Calu3 (cell line): ENCODE measurements at regions of chr2 and their contacts with region 1.

Region 1: DNA sequence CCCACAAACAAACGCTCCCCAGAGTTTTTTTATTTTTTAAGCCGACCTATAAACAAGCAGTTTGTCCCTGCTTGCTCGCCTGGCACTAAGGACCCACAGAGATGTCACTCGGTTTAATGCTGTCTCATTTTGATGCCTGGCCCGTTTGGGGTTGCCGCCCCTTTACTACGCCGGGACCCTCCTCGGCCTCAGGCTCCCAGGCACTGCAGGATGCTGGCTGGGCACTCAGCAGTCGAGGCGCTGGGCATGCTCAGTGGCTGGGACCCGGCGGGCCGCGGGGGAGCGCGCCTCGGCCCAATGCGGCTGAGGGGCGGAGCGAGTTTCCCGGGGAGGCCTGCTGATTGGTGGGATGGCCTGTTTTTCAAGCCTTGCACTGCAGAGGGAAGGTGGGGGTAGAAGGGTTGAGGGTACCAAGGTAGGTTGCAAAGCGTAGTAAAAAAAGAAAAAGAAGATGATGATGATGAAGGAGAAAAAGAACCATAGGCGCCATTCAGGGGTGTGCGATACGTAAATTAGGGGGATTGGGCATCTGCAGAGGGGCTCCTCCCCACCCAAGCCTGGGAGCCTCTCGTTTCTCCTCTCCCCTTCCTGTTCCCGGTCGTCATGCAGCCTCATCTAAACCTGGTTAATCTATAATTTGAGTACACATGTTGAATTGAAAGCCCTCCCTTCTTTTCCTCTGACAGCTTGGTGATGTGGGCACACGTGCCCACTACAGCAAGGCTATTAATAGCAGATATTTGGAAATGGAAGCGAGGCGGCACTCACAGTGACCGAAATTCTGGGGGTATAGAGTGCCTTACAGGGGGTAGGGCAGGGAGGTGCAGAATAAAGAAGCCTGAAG is 1.5 kb upstream of the IRS1 start:
- DNase-seq: peak; percentile 94
- H3K4me3 Mint-ChIP-seq: peak overlapping the region; percentile 87
- H3K27ac Mint-ChIP-seq: peak overlapping the region; percentile 83
- H3K4me1 Mint-ChIP-seq: peaks cover 44% of the 10 kb centered on the region
- H3K27me3 Mint-ChIP-seq: no peaks in the 10 kb centered on the region
- CTCF ChIP-seq: no peak

Region 2: DNA sequence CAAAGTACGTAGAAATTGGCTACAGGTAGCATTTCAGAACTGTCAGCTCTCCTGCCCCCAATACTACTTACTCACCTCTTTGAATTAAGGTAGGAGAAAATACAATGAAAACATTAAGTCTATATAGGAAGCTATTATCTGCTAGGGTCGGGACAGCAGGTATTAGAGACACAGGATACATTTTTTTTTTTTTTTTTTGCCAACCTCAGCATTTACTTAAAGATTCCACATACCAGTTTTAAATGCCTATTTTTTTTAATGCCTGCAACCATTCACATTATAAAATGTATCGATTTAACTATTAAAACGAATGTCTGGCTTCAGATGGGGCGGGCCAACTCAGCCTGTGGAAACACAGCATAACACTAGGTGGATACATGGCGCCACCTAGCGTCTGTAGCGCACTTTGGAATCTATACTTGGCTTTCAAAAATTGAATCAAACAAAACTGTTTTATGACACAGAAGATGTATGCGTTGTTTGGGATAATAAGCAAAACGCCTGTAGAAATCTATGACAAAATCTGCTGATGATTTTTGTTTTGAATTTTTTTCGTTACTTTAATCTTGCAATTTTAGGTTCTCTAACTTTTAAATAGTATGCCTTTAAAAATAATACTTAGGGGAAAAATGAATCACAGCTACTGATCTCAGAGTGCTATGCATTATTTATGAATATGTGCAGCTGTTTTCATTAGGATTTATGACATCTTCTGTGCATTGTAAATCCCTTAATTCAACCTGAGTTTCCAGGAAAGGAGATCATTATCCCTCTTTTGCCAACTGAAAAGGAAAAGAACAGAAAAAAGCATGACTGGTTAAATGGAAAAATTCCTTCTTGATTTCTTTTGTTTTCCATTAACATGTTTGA is 1140.7 kb before region 1 on chr2:
- CTCF ChIA-PET with region 1: interaction called, 14 read pairs
- intact Hi-C with region 1: no loop called
- DNase-seq: peak; percentile 78
- H3K4me3 Mint-ChIP-seq: no peak overlapping the region
- H3K27ac Mint-ChIP-seq: no peak overlapping the region
- H3K4me1 Mint-ChIP-seq: no peaks in the 10 kb centered on the region
- H3K27me3 Mint-ChIP-seq: no peaks in the 10 kb centered on the region
- CTCF ChIP-seq: peak; percentile 81

Region 3: GRCh38 chr2:225889446-225889850 is 911.7 kb before region 1 on chr2:
- CTCF ChIA-PET with region 1: interaction called, 7 read pairs
- intact Hi-C with region 1: loop called (anchors 1 kb)
- DNase-seq: peak; percentile 33
- H3K4me3 Mint-ChIP-seq: no peak overlapping the region
- H3K27ac Mint-ChIP-seq: no peak overlapping the region
- H3K4me1 Mint-ChIP-seq: peaks cover 5% of the 10 kb centered on the region
- H3K27me3 Mint-ChIP-seq: no peaks in the 10 kb centered on the region
- CTCF ChIP-seq: peak; percentile 78

Region 4: GRCh38 chr2:226130192-226130591 is 671.0 kb before region 1 on chr2:
- CTCF ChIA-PET with region 1: interaction called, 4 read pairs
- intact Hi-C with region 1: loop called (anchors 5 kb)
- DNase-seq: no peak
- H3K4me3 Mint-ChIP-seq: no peak overlapping the region
- H3K27ac Mint-ChIP-seq: no peak overlapping the region
- H3K4me1 Mint-ChIP-seq: peaks cover 21% of the 10 kb centered on the region
- H3K27me3 Mint-ChIP-seq: no peaks in the 10 kb centered on the region
- CTCF ChIP-seq: no peak

Region 5: GRCh38 chr2:226489775-226490541 is 311.2 kb before region 1 on chr2:
- CTCF ChIA-PET with region 1: no interaction called
- intact Hi-C with region 1: no loop called
- DNase-seq: no peak
- H3K4me3 Mint-ChIP-seq: no peak overlapping the region
- H3K27ac Mint-ChIP-seq: no peak overlapping the region
- H3K4me1 Mint-ChIP-seq: peaks cover under 1% of the 10 kb centered on the region
- H3K27me3 Mint-ChIP-seq: no peaks in the 10 kb centered on the region
- CTCF ChIP-seq: no peak

Region 6: GRCh38 chr2:226583715-226584114 is 217.4 kb before region 1 on chr2:
- CTCF ChIA-PET with region 1: interaction called, 3 read pairs
- intact Hi-C with region 1: loop called (anchors 5 kb)
- DNase-seq: no peak
- H3K4me3 Mint-ChIP-seq: peak overlapping the region; percentile 19
- H3K27ac Mint-ChIP-seq: peak overlapping the region; percentile 73
- H3K4me1 Mint-ChIP-seq: peaks cover 57% of the 10 kb centered on the region
- H3K27me3 Mint-ChIP-seq: no peaks in the 10 kb centered on the region
- CTCF ChIP-seq: no peak

Region 7: GRCh38 chr2:226638576-226638975 is 162.6 kb before region 1 on chr2:
- CTCF ChIA-PET with region 1: no interaction called
- intact Hi-C with region 1: no loop called
- DNase-seq: peak; percentile 9
- H3K4me3 Mint-ChIP-seq: no peak overlapping the region
- H3K27ac Mint-ChIP-seq: no peak overlapping the region
- H3K4me1 Mint-ChIP-seq: peaks cover 17% of the 10 kb centered on the region
- H3K27me3 Mint-ChIP-seq: no peaks in the 10 kb centered on the region
- CTCF ChIP-seq: no peak

Region 8: DNA sequence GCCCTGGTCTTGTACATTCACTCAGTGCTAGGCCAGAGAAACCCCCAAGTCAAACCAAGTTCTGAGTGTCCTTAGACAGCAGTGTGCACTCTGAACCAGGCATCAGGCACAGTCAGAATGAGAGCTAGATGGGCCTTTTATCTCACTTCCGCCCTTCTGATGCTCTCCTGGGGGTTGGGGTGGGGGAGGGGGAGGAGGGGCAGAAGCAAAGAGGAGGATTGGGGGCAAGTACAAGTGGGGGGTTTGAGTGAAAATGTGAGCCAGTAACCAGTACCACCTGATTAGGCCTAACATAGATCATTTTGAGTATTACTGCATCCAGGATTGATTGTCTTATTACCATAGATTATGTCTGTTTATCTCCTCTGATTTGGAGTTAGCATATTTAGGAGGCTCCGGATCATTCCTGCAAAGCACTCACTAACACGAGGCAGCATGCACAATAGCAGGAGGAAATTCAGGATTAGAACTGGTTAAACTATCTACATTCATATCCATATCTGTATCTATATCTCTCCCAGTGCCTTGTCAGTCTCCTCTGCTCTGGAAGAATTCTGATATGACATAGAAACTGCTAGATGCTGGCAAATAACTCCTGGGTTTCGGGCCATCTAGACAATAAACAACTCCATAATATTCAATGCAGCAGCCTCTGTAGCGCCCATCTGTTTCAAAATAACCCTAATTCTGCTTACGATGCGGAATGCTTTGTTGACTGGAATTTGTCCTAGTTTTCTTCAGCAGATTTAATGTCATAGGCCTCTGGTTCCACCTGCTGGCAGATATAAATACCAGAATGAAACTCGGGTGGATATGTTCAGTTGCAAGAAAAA is 183.8 kb after region 1 on chr2:
- CTCF ChIA-PET with region 1: interaction called, 9 read pairs
- intact Hi-C with region 1: loop called (anchors 1 kb)
- DNase-seq: peak; percentile 40
- H3K4me3 Mint-ChIP-seq: no peak overlapping the region
- H3K27ac Mint-ChIP-seq: no peak overlapping the region
- H3K4me1 Mint-ChIP-seq: no peaks in the 10 kb centered on the region
- H3K27me3 Mint-ChIP-seq: no peaks in the 10 kb centered on the region
- CTCF ChIP-seq: peak; percentile 53